Head of caudate nucleus (tissue), 42 donors: ENCODE measurements at regions of chr1 and their contacts with region 1.

Region 1: GRCh38 chr1:201559679-201560162 is 20.8 kb downstream of the NAV1 start:
- DNase-seq: peak; percentile 81 to 95 (median 89)

Region 2: GRCh38 chr1:201530741-201531531 is 28.8 kb before region 1 on chr1:
- intact Hi-C with region 1: loop called (anchors 2 kb)
- DNase-seq: peak; percentile 65 to 96 (median 89)

Region 3: DNA sequence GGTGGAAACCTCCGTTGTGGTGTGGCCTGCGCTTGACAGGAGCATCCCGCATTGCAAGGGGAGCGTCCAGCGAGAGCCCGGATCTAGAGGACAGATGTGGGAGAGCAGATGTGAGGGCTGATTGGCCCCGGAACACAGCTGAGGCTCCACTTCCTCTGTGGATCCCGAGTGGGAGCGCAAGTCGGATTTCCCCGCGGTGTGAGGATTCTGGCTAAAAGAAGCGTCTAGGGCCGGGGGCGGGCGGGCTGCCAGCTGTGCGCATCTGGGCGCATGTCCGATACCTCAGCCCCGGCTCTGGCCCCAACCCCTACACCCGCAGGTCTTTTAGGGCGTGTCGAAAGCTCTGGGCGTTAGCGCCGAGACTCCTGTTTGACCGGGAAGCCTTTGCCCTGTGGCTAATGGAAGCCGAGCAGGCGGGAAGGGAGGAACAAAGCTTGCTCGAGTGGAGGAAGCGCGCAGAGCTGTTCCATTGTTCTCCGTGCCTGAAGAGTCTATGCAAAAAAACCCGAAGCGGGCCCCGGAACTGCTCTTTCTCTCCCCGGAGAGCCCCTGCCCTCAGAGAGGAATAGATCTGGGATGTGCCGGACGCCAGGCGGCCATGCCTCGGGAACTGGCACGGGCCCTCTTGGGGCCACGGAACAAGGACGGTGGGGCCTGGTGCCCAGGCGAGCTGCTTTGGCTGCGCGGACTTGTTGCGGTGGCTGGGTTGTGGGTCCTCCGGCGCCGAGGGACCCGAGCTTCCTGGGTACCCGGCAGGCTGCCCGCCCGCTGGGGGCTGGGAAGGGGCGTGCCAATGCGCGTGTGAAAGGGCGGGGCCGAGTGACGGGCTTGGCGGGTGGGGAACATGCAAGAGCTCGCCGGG is 90.3 kb after region 1 on chr1:
- intact Hi-C with region 1: loop called (anchors 10 kb)
- DNase-seq: peak; percentile 70 to 95 (median 87)

Region 4: GRCh38 chr1:201703621-201704439 is 144.1 kb after region 1 on chr1:
- intact Hi-C with region 1: loop called (anchors 1 kb)
- DNase-seq: peak; percentile 71 to 95 (median 86)